CD8-positive, alpha-beta T cell (primary cell): ENCODE measurements at regions of chr2 and their contacts with region 1.

Region 1: GRCh38 chr2:178414266-178415247 is 36.4 kb downstream of the PRKRA start:
- DNase-seq: peak; percentile 51 to 90 (median 75)
- ATAC-seq: peak; percentile 53
- H3K4me3 ChIP-seq: peak overlapping the region; percentile 54 to 66
- H3K4me3 Mint-ChIP-seq: peak overlapping the region; percentile 80
- H3K27ac ChIP-seq: peak overlapping the region; percentile 84 to 86
- H3K27ac Mint-ChIP-seq: peak overlapping the region; percentile 97
- H3K4me1 ChIP-seq: peaks cover 7% of the 10 kb centered on the region
- H3K4me1 Mint-ChIP-seq: peaks cover 30% of the 10 kb centered on the region
- H3K27me3 ChIP-seq: no peaks in the 10 kb centered on the region
- H3K27me3 Mint-ChIP-seq: no peaks in the 10 kb centered on the region
- CTCF ChIP-seq: peak; percentile 87

Region 2: GRCh38 chr2:177552422-177553175 is 862.0 kb before region 1 on chr2:
- CTCF ChIA-PET with region 1: no interaction called
- POLR2A ChIA-PET with region 1: no interaction called
- intact Hi-C with region 1: loop called in 1 of 2 experiments (anchors 2 kb)
- DNase-seq: peak; percentile 83 to 97 (median 91)
- ATAC-seq: peak; percentile 89
- H3K4me3 ChIP-seq: peak overlapping the region; percentile 85 to 99
- H3K4me3 Mint-ChIP-seq: peak overlapping the region; percentile 96
- H3K27ac ChIP-seq: peak overlapping the region; percentile 98 to 100
- H3K27ac Mint-ChIP-seq: peak overlapping the region; percentile 99
- H3K4me1 ChIP-seq: peaks cover 6% of the 10 kb centered on the region
- H3K4me1 Mint-ChIP-seq: peaks cover 12% of the 10 kb centered on the region
- H3K27me3 ChIP-seq: peaks cover 0 to 2% of the 10 kb centered on the region in 2 experiments
- H3K27me3 Mint-ChIP-seq: no peaks in the 10 kb centered on the region
- CTCF ChIP-seq: no peak

Region 3: DNA sequence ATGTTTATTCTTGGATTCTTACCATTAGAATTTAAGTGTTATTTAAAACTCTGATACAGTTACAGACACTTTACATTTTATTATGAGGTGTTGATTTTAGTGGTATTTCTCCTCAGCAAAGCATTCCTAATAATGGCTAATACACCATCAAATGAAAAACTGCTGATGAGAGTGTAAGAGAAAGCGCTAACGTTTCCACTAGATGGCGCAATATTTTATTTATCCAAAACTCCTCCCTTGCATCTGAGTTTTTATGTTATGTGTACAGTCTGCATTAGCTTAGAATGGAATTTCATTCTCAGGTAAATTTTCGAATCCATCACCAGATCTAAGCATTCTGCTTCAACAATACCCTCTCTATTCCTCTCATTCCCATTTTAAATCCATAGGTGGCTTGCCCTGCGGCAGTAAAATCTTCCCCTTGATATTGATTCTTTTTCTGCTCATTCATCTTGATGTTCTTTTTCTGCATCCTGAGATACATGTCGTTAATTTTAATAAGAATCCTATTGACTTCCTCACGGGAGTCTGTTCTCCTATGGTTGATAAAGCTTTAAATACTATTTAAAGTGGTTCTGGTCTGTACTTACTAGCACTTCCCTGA is 17.5 kb before region 1 on chr2:
- CTCF ChIA-PET with region 1: interaction called, 77 read pairs
- POLR2A ChIA-PET with region 1: no interaction called
- intact Hi-C with region 1: loop called (anchors 1 kb)
- DNase-seq: peak in 2 of 9 experiments; percentile 55 to 67
- ATAC-seq: peak; percentile 62
- H3K4me3 ChIP-seq: no peak overlapping the region
- H3K4me3 Mint-ChIP-seq: no peak overlapping the region
- H3K27ac ChIP-seq: no peak overlapping the region
- H3K27ac Mint-ChIP-seq: no peak overlapping the region
- H3K4me1 ChIP-seq: no peaks in the 10 kb centered on the region
- H3K4me1 Mint-ChIP-seq: no peaks in the 10 kb centered on the region
- H3K27me3 ChIP-seq: no peaks in the 10 kb centered on the region
- H3K27me3 Mint-ChIP-seq: peaks cover 7% of the 10 kb centered on the region
- CTCF ChIP-seq: peak; percentile 84

Region 4: DNA sequence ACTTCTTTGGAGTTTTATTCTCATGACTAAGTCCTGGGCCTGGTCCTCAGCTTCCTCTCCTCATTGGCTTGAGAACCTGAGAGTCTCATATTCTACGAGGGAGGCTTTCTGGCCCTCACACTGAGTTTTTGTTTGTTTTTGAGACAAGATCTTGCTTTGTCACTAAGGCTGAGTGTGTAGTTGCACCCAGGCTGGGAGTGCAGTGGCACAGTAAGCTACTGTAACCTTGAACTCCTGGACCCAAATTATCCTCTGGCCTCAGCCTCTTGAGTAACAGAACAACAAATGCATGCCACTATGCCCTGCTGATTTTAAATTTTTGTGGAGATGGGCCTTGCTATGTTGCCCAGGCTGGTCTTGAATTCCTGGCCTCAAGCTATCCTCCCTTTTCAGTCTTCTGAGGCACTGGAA is 13.8 kb after region 1 on chr2:
- CTCF ChIA-PET with region 1: interaction called, 14 read pairs
- POLR2A ChIA-PET with region 1: no interaction called
- intact Hi-C with region 1: no loop called
- DNase-seq: no peak
- ATAC-seq: no peak
- H3K4me3 ChIP-seq: no peak overlapping the region
- H3K4me3 Mint-ChIP-seq: no peak overlapping the region
- H3K27ac ChIP-seq: no peak overlapping the region
- H3K27ac Mint-ChIP-seq: no peak overlapping the region
- H3K4me1 ChIP-seq: no peaks in the 10 kb centered on the region
- H3K4me1 Mint-ChIP-seq: no peaks in the 10 kb centered on the region
- H3K27me3 ChIP-seq: no peaks in the 10 kb centered on the region
- H3K27me3 Mint-ChIP-seq: no peaks in the 10 kb centered on the region
- CTCF ChIP-seq: no peak

Region 5: DNA sequence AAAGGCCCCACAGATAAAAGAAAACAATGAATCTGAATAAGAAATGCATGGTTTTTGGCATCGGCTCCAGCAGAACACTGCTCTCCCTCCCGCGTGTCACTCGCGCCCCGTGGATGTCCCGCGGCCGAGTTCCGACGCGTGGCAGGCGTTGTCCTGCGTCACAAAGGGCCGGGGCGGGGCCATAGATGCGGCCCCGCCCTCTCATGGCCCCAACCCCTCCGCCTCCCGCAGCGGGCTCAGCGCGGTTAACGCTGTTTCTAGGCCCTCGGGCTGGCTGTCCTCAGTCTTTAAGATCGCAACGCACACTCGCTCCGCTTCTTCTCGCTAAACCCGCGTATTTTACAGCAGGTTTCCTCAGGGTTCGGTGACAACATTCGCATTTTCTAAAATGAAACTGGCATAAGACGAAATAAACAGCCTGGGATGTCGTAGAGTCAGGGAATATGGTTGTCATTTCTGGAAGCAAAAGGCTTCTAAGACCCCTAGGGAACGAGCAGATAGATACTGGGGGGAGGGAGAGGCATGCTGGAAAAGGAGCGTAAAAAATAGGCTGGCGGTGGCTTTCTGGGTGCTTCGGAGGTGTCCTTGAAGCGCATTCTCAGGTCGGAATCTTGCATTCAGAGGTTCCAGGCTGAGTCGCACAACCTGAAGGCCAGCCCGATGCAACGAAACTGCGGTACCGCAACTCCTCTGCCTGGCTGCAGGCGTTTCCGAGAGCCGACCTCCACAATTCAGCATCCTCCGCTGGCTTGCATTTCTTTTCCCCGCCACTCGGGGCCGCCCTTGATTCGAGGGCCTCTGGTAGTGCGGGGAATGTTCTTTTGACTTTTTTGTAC is 64.1 kb after region 1 on chr2 and contains the start of gene FKBP7:
- CTCF ChIA-PET with region 1: interaction called, 4 read pairs
- POLR2A ChIA-PET with region 1: no interaction called
- intact Hi-C with region 1: loop called (anchors 2 kb)
- DNase-seq: peak; percentile 79 to 95 (median 86)
- ATAC-seq: peak; percentile 82
- H3K4me3 ChIP-seq: peak within 1 kb of the TSS; percentile 84 to 88
- H3K4me3 Mint-ChIP-seq: peak within 1 kb of the TSS; percentile 98
- H3K27ac ChIP-seq: peak within 1 kb of the TSS; percentile 92 to 93
- H3K27ac Mint-ChIP-seq: peak within 1 kb of the TSS; percentile 99
- H3K4me1 ChIP-seq: peaks cover 39% of the 10 kb centered on the region
- H3K4me1 Mint-ChIP-seq: peaks cover 51% of the 10 kb centered on the region
- H3K27me3 ChIP-seq: no peaks in the 10 kb centered on the region
- H3K27me3 Mint-ChIP-seq: no peaks in the 10 kb centered on the region
- CTCF ChIP-seq: peak; percentile 87
- total RNA-seq, gene FKBP7: 0.69 to 0.79 TPM